SK-N-SH (cell line): ENCODE measurements at regions of chr16 and their contacts with region 1.

Region 1: GRCh38 chr16:50065624-50066481 is at the start of gene HEATR3:
- DNase-seq: peak; percentile 97
- H3K4me3 ChIP-seq: peak within 1 kb of the TSS; percentile 76 to 93
- H3K27ac ChIP-seq: peak within 1 kb of the TSS; percentile 89 to 95
- H3K4me1 ChIP-seq: peaks cover 12 to 17% of the 10 kb centered on the region in 2 experiments; a peak in 3 of 4 replicates
- H3K27me3 ChIP-seq: no peaks in the 10 kb centered on the region
- CTCF ChIP-seq: no peak
- EP300 ChIP-seq: no peak
- RAD21 ChIP-seq: no peak
- polyA plus RNA-seq, gene HEATR3: 10.1 and 12.9 TPM in 2 replicates

Region 2: GRCh38 chr16:50081428-50082018 is 15.7 kb after region 1 on chr16:
- CTCF ChIA-PET with region 1: interaction called, 10 read pairs
- POLR2A ChIA-PET with region 1: no interaction called
- DNase-seq: no peak
- H3K4me3 ChIP-seq: no peak overlapping the region
- H3K27ac ChIP-seq: no peak overlapping the region
- H3K4me1 ChIP-seq: no peaks in the 10 kb centered on the region
- H3K27me3 ChIP-seq: no peaks in the 10 kb centered on the region
- CTCF ChIP-seq: no peak
- EP300 ChIP-seq: no peak
- RAD21 ChIP-seq: no peak